GM12878 (cell line): ENCODE measurements at regions of chr7 and their contacts with region 1.

Region 1: GRCh38 chr7:6706677-6707544 is at the start of gene ZNF12:
- DNase-seq: peak; percentile 87
- ATAC-seq: peak; percentile 94
- H3K4me3 ChIP-seq: peak within 1 kb of the TSS; percentile 88
- H3K27ac ChIP-seq: peak within 1 kb of the TSS; percentile 77
- H3K4me1 ChIP-seq: peaks cover 3% of the 10 kb centered on the region; the same call in 1 of the 2 replicates
- H3K27me3 ChIP-seq: no peaks in the 10 kb centered on the region
- CTCF ChIP-seq: no peak
- EP300 ChIP-seq: no peak; a peak in 1 of 4 replicates
- POLR2A ChIP-seq: peak; percentile 91
- RAD21 ChIP-seq: no peak
- polyA plus RNA-seq, gene ZNF12: 6.7 to 7.2 TPM

Region 2: DNA sequence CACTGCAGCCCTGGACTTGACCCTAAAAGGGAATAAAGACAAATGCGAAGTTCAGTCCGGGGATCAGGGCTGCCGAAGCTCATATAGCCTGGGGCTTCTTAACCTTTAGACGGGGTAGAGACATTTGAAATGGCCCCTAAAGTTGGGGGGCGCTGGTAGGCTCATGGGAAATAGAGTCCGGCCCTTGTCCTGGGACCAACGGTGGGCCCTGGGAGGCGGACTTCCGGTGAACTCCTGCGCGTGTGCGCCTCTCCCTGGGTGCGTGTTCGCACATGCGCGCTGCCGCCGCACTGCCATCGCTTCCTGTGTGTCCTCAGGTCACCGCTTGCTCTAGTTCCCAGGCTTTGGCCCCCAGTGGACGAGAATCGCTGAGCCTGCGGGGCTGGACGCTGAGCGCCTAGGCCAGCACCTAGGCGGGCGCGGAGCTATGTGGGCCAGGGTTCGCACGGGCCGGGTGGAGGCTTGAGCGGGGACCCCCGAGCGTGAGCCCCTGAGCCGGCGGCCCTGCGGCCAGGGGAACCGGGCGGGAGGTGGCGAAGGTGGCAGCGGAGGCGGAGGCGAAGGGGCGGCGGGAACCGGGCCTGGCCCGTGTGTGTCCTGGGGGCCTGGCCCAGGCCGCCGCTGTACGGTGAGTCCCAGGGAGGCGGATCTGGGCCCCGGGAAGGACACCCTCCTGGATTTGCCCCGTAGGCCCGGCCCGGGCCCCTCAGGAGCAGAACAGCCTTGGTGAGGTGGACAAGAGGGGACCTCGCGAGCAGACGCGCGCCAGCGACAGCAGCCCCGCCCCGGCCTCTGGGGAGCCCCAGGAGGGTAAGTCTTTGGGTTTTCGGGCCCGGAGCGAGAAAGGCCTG is 22.8 kb after region 1 on chr7:
- CTCF ChIA-PET with region 1: no interaction called
- POLR2A ChIA-PET with region 1: interaction called, 3 read pairs
- RAD21 ChIA-PET with region 1: interaction called, 6 read pairs
- SMC1A ChIA-PET with region 1: no interaction called
- in situ Hi-C with region 1: no loop called
- intact Hi-C with region 1: loop called (anchors 2 kb)
- DNase-seq: peak; percentile 83
- ATAC-seq: peak; percentile 98
- H3K4me3 ChIP-seq: peak overlapping the region; percentile 84
- H3K27ac ChIP-seq: peak overlapping the region; percentile 93
- H3K4me1 ChIP-seq: peaks cover 12% of the 10 kb centered on the region
- H3K27me3 ChIP-seq: no peaks in the 10 kb centered on the region
- CTCF ChIP-seq: no peak
- EP300 ChIP-seq: no peak; a peak in 1 of 4 replicates
- POLR2A ChIP-seq: peak; percentile 94
- RAD21 ChIP-seq: no peak